Cardiac septum (tissue), 1 donor: ENCODE measurements at regions of chr5 and their contacts with region 1.

Region 1: DNA sequence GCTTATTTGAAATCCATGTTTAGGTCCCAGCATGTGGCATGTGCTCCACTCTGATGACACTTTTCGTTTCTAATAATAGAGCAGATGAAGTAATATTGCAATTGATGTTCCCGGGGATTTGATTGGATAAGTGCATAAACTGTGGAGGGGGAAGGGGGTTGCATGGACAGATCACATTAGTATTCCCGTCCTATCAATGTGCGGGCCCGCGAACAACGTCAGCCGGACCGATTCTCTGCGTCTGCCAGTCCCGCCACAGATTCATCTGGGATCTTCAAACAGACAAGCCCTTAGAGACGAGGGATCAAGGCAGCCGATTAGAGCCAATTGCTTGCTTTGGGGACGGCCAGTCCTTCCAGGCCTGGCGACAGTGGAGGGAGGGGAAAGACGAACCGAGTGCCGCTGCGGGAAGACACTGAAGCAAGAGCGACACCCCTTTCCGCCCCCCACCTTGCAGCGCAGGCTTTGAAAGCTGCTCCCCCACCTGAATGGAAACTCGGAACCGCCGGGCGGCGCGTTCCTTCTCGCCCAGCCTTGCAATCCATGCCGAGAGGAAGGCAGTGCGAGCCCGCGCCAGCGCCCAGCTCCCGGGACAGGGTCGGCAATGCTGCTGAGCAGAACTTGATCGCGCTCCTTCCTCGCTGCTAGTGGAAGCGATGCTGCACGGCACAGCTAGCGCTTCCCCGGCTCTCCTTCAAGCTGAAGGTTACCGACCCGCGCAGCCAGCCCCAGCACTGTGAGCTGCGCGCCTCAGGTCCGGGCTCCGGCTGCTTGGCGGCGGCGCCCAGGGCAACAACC is at the start of gene RGS7BP:
- DNase-seq: peak; percentile 78
- total RNA-seq, gene RGS7BP: 1.7 TPM

Region 2: DNA sequence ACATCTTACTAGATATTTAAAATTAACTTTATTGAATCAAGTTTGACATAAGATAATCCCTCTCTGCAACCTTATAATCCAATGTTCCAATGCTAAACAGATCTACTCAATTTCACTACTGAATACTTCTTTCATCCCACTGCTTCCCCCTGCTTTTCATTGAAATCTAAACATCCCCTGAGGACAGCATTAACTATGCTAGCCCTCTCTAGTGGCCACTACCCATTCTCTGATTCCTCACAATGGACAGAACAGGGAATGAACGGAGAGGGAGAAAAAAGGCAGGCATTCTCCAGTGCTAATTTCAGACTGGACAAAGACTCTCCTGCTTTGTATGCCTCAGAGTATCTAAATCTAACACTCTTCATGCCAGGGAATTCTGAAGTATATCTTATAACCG is 54.4 kb before region 1 on chr5:
- intact Hi-C with region 1: no loop called
- DNase-seq: no peak

Region 3: GRCh38 chr5:64532212-64532611 is 26.2 kb after region 1 on chr5:
- intact Hi-C with region 1: loop called (anchors 1 kb)
- DNase-seq: no peak

Region 4: GRCh38 chr5:64595031-64595855 is 89.3 kb after region 1 on chr5:
- intact Hi-C with region 1: loop called (anchors 2 kb)
- DNase-seq: no peak